ENCODE measurements at regions of chr7 and their contacts with region 1.

Region 1: DNA sequence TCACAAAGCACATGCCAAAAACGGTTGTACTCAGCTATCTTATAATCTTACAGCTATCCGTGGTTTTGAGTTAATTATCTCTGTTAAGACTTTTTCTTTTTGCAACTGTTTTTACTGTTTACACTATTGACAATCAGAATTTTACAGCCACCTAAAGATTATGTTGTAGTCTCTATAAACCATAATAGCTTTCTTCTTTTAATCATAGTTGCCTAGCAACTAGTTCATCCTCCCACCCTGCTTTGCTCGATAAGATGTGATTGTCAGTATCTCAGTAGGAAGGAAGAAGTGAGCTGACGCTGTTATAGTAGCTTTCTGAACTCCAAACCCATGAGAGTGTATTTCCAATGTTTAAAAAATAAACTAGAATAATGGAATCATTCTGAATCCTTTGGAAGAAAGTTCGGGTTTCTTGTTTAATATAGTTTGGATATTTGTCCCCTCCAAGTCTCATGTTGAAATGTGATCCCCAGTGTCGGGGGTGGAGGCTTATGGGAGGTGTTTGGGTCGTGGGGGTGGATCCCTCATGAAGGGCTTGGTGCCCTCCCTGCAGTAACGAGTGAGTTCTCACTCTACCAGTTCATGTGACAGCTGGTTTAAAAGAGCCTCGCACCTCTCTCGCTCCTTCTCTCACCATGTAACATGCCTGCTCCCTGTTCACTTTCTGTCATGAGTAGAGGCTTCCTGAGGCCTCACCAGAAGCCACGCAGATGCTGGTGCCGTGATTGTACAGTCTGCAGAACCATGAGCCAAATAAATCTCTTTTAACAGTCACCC is 68.1 kb downstream of the SVOPL start:
- DNase-seq: no peak
- ATAC-seq: no peak
- H3K4me3 ChIP-seq: no peak overlapping the region
- H3K4me3 Mint-ChIP-seq: no peak overlapping the region
- H3K27ac ChIP-seq: no peak overlapping the region
- H3K27ac Mint-ChIP-seq: no peak overlapping the region
- H3K4me1 ChIP-seq: no peaks in the 10 kb centered on the region
- H3K4me1 Mint-ChIP-seq: peaks cover 13% of the 10 kb centered on the region
- H3K27me3 ChIP-seq: no peaks in the 10 kb centered on the region
- H3K27me3 Mint-ChIP-seq: no peaks in the 10 kb centered on the region
- CTCF ChIP-seq: no peak

Region 2: DNA sequence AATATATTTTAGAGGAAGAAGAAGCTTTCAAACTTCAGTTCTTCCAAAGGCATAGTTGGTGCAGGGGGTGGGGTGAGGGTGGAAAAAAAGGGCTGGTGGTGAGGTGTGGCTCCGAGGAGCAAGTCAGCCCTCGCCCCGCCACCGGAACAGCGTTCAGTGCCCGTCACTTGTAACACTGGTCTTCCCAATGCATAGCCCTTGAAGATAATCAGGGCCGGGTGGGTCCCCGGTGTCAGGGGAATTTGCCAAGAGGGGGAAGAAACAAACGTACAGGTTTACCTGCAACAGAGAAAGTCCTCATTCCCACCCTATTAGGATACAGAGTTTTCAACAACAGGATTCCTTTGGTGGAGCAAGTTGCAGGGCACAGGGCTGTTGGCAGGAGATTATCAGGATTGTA is 66.6 kb after region 1 on chr7:
- CTCF ChIA-PET with region 1: no interaction called
- POLR2A ChIA-PET with region 1: no interaction called
- intact Hi-C with region 1: loop called in 1 of 2 experiments (anchors 5 kb)
- DNase-seq: no peak
- ATAC-seq: no peak
- H3K4me3 ChIP-seq: no peak overlapping the region
- H3K4me3 Mint-ChIP-seq: no peak overlapping the region
- H3K27ac ChIP-seq: no peak overlapping the region
- H3K27ac Mint-ChIP-seq: no peak overlapping the region
- H3K4me1 ChIP-seq: no peaks in the 10 kb centered on the region
- H3K4me1 Mint-ChIP-seq: no peaks in the 10 kb centered on the region
- H3K27me3 ChIP-seq: peaks cover 0 to 2% of the 10 kb centered on the region in 2 experiments
- H3K27me3 Mint-ChIP-seq: no peaks in the 10 kb centered on the region
- CTCF ChIP-seq: no peak

Measured in CD4-positive, alpha-beta T cell (primary cell).